HEK293 (cell line): ENCODE measurements at regions of chr14 and their contacts with region 1.

Region 1: GRCh38 chr14:23120541-23121251 is 1.6 kb upstream of the CEBPE start:
- H3K4me3 ChIP-seq: no peak overlapping the region
- H3K27ac ChIP-seq: no peak overlapping the region
- H3K4me1 ChIP-seq: no peaks in the 10 kb centered on the region
- CTCF ChIP-seq: peak; percentile 99

Region 2: DNA sequence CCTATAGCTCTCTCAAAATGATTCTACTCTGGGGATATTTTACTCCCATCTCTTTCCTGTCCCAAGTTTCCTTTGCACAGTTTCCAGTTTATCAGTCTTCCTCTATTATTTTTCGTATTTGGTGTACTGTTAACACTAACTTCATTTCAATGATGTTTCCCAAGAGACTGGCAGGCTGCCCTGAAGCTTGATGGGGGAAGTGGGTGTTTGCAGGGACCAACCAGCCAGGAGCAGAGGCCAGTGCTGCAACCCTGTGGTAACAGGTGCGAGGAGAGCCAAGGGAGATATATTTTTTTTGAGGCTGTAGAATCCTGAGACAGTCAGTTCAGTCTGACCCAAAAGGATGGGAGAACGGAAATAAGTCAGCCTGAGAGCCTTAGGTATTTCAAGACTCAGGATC is 10.2 kb after region 1 on chr14:
- CTCF ChIA-PET with region 1: interaction called, 25 read pairs
- POLR2A ChIA-PET with region 1: interaction called, 4 read pairs
- H3K4me3 ChIP-seq: no peak overlapping the region
- H3K27ac ChIP-seq: no peak overlapping the region
- H3K4me1 ChIP-seq: no peaks in the 10 kb centered on the region
- CTCF ChIP-seq: no peak

Region 3: DNA sequence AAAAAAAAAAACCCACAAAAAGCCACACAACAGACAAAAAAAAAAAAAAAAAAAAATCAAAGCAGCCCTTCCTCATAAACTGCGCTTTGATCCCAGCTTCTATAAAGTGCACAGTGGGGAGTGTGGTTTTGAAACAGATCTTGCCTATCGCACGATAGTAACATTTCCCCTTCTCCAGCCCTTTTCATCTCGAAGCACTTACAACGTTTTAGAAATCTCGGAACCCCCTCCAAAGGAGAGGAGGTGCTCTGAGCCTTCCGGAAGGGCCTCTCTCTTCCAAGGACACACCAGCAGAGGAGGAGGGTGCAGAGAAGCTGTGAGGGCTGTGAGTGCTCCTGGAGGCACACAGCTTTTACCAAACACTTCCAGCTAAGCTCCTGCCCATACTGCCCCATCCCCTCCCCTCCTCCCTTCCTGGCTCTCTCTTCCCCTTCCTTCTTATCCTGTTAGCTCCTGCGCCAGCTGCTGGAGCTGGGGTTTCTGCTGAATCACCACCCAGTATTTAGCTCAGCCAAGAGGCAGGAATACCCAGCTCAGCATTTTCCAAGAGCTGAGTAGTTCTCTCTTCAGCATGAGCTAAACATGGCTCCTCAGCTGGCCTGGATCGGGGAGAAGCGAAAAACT is 34.4 kb after region 1 on chr14:
- CTCF ChIA-PET with region 1: interaction called, 11 read pairs
- POLR2A ChIA-PET with region 1: interaction called, 11 read pairs
- H3K4me3 ChIP-seq: no peak overlapping the region
- H3K27ac ChIP-seq: no peak overlapping the region
- H3K4me1 ChIP-seq: peaks cover 2% of the 10 kb centered on the region; the same call in 1 of the 2 replicates
- CTCF ChIP-seq: no peak

Region 4: GRCh38 chr14:23186913-23187654 is 66.4 kb after region 1 on chr14:
- CTCF ChIA-PET with region 1: interaction called, 424 read pairs
- POLR2A ChIA-PET with region 1: interaction called, 5 read pairs
- H3K4me3 ChIP-seq: no peak overlapping the region
- H3K27ac ChIP-seq: no peak overlapping the region
- H3K4me1 ChIP-seq: no peaks in the 10 kb centered on the region; the same call in 1 of the 2 replicates
- CTCF ChIP-seq: 0 out of 2 replicates have a peak, but pooled peaks have one; percentile 39

Region 5: DNA sequence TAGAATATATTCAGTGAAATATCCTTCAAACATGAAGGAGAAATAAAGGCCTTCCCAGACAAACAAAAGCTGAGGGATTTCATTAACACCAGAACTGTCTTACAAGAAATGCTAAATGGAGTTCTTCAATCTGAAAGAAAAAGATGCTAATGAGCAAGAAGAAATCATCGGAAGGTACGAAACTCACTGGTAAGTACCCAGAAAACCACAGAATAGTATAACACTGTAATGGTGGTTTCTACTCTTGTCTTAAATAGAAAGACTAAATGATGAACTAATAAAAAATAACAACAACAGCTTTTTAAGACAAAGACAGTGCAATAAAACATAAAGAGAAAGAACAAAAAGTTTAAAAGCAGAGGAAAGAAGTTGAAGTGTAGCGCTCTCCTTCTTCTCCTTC is 98.4 kb after region 1 on chr14:
- CTCF ChIA-PET with region 1: interaction called, 11 read pairs
- POLR2A ChIA-PET with region 1: no interaction called
- H3K4me3 ChIP-seq: no peak overlapping the region
- H3K27ac ChIP-seq: no peak overlapping the region
- H3K4me1 ChIP-seq: no peaks in the 10 kb centered on the region
- CTCF ChIP-seq: no peak